HEK293T (cell line): ENCODE measurements at regions of chr11 and their contacts with region 1.

Region 1: GRCh38 chr11:73982969-73983740 is 512 bp upstream of the UCP2 start:
- DNase-seq: peak; percentile 96

Region 2: DNA sequence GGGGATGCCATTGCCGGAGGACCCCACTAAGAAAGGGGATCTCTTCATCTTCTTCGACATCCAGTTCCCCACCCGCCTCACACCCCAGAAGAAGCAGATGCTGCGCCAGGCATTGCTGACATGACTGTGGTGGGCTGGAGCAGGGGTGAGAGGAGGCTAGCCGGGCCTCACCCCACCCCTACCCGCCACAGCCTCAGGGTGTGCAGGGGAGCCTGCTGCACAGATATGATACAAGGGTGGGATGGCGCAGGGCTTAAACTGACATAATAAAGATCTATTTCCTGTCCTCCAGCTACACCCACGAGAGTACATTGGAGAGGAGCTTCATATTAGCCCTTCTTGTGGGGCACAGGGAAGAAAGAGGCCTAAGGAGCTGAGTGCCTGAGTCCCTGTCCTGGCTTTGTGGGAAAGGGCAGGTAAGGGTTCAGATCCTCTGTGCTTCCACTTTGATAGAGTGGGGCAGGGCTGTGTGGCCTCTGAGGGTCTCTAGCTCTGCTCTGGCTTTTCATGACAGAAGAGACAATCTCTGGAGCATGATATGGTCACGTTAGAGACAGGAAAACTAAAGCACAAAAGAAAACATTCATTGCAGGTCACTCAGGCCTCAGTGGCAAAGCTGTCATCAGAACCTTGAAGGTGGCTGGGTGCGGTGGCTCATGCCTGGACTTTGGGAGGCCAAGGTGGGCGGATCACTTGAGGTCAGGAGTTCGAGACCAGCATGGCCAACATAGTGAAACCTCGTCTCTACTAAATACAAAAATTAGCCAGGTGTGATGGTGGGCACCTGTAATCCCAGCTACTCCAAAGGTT is 13.0 kb before region 1 on chr11:
- CTCF ChIA-PET with region 1: interaction called, 5 read pairs
- POLR2A ChIA-PET with region 1: interaction called, 13 read pairs
- DNase-seq: no peak

Region 3: DNA sequence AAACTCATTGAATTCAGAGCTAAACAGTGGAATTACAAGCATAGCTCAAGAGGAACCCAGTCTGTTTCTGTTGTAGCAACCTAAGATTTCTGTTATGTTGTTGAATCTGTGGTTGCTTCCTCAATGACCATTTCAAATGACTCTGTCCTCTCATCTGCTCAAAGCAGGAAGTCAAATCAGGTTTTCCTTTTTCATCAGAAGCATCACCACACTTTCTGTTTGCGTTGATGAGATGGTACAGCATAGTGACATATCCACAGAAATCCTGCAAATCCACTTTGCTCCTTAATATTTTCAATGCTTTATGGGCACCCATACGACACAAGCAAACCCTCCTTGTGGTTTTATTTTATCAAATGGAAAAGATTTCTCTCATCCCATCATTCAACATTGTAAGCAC is 12.1 kb after region 1 on chr11:
- CTCF ChIA-PET with region 1: no interaction called
- POLR2A ChIA-PET with region 1: interaction called, 16 read pairs
- DNase-seq: no peak

Region 4: DNA sequence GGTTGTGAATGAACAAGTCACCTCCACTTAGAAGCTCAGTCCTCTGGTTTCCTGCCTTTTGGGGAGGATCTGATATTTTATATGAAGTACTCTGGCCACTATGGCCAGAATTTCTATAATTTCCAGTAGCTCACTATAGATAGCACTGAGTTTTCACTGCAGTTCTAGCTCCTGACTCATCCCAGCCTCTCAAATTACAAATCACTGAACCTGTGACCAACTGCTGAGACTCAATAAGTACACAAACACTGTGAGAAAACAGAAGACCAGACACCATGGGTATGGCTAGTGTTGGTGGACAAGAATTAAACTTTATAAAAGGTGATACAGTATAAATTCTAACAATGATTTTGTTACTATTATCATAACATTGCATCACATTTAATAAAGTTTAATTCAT is 72.8 kb after region 1 on chr11:
- CTCF ChIA-PET with region 1: no interaction called
- POLR2A ChIA-PET with region 1: no interaction called
- DNase-seq: no peak

Region 5: GRCh38 chr11:74081428-74081827 is 98.3 kb after region 1 on chr11:
- CTCF ChIA-PET with region 1: no interaction called
- POLR2A ChIA-PET with region 1: no interaction called
- DNase-seq: no peak